ENCODE measurements at regions of chr20 and their contacts with region 1.

Region 1: GRCh38 chr20:63973636-63974402 is 4.1 kb upstream of the ZNF512B start:
- DNase-seq: peak; percentile 86
- CTCF ChIP-seq: peak; percentile 98

Region 2: GRCh38 chr20:63923651-63924050 is 50.2 kb before region 1 on chr20:
- CTCF ChIA-PET with region 1: no interaction called
- POLR2A ChIA-PET with region 1: no interaction called
- DNase-seq: no peak
- CTCF ChIP-seq: no peak

Region 3: DNA sequence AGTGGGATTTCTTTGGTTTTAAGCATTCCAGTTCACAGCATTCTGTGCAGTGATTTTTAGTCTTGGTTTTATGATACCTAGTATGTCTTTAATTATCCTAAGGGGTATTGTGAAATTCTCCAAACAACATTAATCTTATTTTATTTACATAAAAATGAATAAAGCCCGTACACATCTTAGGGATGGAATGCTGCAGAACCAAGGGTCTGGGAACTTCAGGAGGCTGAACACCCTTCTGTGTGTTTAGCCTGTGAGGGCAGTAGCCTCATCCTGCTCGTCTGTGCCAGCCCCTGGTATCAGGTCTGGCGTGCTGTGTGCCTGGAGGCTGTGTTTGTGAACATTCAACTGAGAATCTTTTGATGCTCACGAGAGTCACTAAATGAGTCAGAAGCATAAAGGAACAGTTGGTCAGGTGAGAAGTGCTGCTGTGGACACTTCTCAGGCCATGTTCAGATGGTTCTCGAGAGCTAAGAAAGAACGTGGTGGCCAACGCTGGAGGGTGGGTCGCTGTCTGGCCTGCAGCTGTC is 37.0 kb after region 1 on chr20:
- CTCF ChIA-PET with region 1: interaction called, 13 read pairs
- POLR2A ChIA-PET with region 1: no interaction called
- DNase-seq: no peak
- CTCF ChIP-seq: no peak

Measured in GM10248 (cell line).